SK-N-SH (cell line): ENCODE measurements at regions of chr2 and their contacts with region 1.

Region 1: DNA sequence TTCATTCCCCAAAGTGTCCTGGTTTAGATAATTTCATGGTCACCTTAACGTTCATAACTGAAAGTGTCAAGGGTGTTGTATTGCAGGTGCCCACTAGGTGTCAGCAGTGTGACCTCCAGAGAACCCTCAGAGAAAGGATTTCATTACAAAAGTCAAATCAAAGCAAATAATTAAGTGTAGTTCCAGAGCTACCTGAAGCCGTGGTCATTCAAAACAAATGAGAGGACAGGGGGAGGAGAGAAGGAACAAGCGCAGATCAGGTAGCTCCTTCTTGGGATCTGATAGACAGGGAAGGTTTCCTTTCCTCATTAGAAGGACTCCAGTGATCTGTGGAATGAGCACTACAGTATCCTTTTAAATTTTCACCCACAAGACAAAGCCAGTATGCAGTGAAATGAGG is at the start of gene SLC9A4:
- DNase-seq: peak; percentile 34
- H3K4me3 ChIP-seq: peak within 1 kb of the TSS in 1 of 2 experiments; percentile 10; a peak in 1 of 4 replicates
- H3K27ac ChIP-seq: no peak within 1 kb of the TSS
- H3K4me1 ChIP-seq: no peaks in the 10 kb centered on the region
- H3K27me3 ChIP-seq: no peaks in the 10 kb centered on the region
- CTCF ChIP-seq: peak; percentile 98
- EP300 ChIP-seq: no peak
- RAD21 ChIP-seq: peak; percentile 66
- polyA plus RNA-seq, gene SLC9A4: 0.07 and 0.11 TPM in 2 replicates

Region 2: GRCh38 chr2:102460467-102460866 is 12.6 kb before region 1 on chr2:
- CTCF ChIA-PET with region 1: interaction called, 13 read pairs
- POLR2A ChIA-PET with region 1: no interaction called
- DNase-seq: no peak
- H3K4me3 ChIP-seq: no peak overlapping the region
- H3K27ac ChIP-seq: no peak overlapping the region
- H3K4me1 ChIP-seq: no peaks in the 10 kb centered on the region
- H3K27me3 ChIP-seq: peaks cover 9% of the 10 kb centered on the region
- CTCF ChIP-seq: no peak
- EP300 ChIP-seq: no peak
- RAD21 ChIP-seq: no peak

Region 3: DNA sequence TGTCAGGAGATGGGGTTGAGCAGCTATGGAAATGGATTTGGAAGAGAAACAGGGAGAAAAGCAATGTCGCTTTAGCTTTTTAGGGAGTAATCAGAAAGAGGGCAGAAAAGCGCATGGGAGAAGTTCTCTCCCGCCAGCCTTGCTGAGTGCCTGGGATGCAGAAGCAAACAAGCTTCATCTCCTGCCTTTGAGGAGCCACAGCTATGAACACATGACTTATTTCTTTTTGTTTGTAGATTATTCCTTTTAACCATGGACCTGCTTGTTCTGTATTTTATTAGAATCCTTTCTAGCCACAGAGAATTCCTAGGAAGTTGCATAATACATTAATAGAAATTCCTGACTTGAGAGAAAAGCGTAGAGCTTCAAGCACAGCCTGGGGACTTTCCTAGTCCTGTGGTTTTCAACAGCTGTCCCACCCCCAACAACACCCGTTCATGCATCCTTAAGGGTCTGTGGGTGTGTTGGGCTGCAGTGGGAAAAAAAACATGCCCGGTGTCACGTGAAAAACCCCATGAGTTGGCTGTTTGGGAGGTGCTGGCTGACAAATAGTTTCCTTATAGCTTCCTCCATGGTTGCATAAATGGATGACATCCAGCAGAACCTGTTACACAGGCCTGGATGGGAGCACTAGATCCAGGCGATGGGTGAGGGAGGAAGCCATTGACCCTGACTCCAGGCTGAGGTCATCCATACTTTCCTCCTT is 14.9 kb after region 1 on chr2:
- CTCF ChIA-PET with region 1: interaction called, 26 read pairs
- POLR2A ChIA-PET with region 1: no interaction called
- DNase-seq: no peak
- H3K4me3 ChIP-seq: peak overlapping the region in 1 of 2 experiments; percentile 43; a peak in 2 of 4 replicates
- H3K27ac ChIP-seq: peak overlapping the region in 1 of 2 experiments; percentile 51; a peak in 2 of 4 replicates
- H3K4me1 ChIP-seq: no peaks in the 10 kb centered on the region; a peak in 1 of 4 replicates
- H3K27me3 ChIP-seq: no peaks in the 10 kb centered on the region
- CTCF ChIP-seq: no peak
- EP300 ChIP-seq: no peak
- RAD21 ChIP-seq: no peak

Region 4: GRCh38 chr2:102615622-102616436 is 142.8 kb after region 1 on chr2:
- CTCF ChIA-PET with region 1: interaction called, 19 read pairs
- POLR2A ChIA-PET with region 1: no interaction called
- DNase-seq: peak; percentile 69
- H3K4me3 ChIP-seq: no peak overlapping the region
- H3K27ac ChIP-seq: no peak overlapping the region
- H3K4me1 ChIP-seq: no peaks in the 10 kb centered on the region
- H3K27me3 ChIP-seq: peaks cover 44% of the 10 kb centered on the region
- CTCF ChIP-seq: peak; percentile 92
- EP300 ChIP-seq: no peak
- RAD21 ChIP-seq: peak; percentile 76